CD4-positive, alpha-beta T cell (primary cell): ENCODE measurements at regions of chr16 and their contacts with region 1.

Region 1: GRCh38 chr16:22335668-22336246 is 38.5 kb downstream of the POLR3E start:
- DNase-seq: no peak
- ATAC-seq: peak; percentile 28
- H3K4me3 ChIP-seq: no peak overlapping the region
- H3K4me3 Mint-ChIP-seq: no peak overlapping the region
- H3K27ac ChIP-seq: no peak overlapping the region
- H3K27ac Mint-ChIP-seq: peak overlapping the region; percentile 64
- H3K4me1 ChIP-seq: no peaks in the 10 kb centered on the region
- H3K4me1 Mint-ChIP-seq: peaks cover 29% of the 10 kb centered on the region
- H3K27me3 ChIP-seq: no peaks in the 10 kb centered on the region
- H3K27me3 Mint-ChIP-seq: no peaks in the 10 kb centered on the region
- CTCF ChIP-seq: no peak

Region 2: DNA sequence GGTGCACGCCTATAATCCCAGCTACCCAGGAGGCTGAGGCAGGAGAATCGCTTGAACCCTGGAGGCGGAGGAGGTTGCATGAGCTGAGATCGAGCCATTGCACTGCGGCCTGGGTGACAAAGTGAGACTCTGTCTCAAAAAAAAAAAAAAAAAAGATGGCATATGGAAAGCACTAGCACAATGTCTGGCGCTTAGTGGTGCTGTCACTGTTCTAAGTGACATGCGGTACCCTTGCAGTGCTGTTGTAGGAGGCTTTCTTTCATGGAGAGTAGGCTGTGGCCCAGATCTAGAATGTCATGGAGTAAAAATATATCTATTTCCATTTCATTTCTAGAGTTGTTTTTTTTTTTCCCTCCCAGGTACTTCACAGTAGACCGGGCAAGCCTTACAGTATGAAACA is 750.9 kb before region 1 on chr16:
- CTCF ChIA-PET with region 1: no interaction called
- POLR2A ChIA-PET with region 1: no interaction called
- intact Hi-C with region 1: no loop called
- DNase-seq: no peak
- ATAC-seq: no peak
- H3K4me3 ChIP-seq: no peak overlapping the region
- H3K4me3 Mint-ChIP-seq: no peak overlapping the region
- H3K27ac ChIP-seq: no peak overlapping the region
- H3K27ac Mint-ChIP-seq: no peak overlapping the region
- H3K4me1 ChIP-seq: peaks cover 6% of the 10 kb centered on the region
- H3K4me1 Mint-ChIP-seq: peaks cover 5% of the 10 kb centered on the region
- H3K27me3 ChIP-seq: no peaks in the 10 kb centered on the region
- H3K27me3 Mint-ChIP-seq: no peaks in the 10 kb centered on the region
- CTCF ChIP-seq: no peak

Region 3: DNA sequence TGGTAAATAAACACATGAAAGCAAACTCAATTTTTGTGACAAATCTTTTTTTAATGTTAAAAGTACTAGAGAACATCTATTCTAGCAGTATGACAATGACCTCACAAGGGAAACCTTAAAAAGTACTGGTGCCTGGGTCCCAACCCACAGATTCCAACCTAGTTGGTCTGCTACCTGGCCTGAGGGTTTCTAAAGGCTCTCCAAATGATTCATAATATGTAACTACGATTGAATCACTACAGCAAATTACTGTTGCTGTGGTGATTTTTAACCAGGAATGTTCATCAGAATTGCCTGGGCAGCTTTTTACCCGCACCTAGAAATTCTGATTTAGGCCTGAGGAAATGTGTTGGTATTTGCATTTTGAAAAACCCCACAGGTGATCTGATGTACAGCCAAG is 12.5 kb after region 1 on chr16:
- CTCF ChIA-PET with region 1: interaction called, 3 read pairs
- POLR2A ChIA-PET with region 1: interaction called, 7 read pairs
- intact Hi-C with region 1: loop called in 1 of 2 experiments (anchors 2 kb)
- DNase-seq: no peak
- ATAC-seq: no peak
- H3K4me3 ChIP-seq: no peak overlapping the region
- H3K4me3 Mint-ChIP-seq: no peak overlapping the region
- H3K27ac ChIP-seq: no peak overlapping the region
- H3K27ac Mint-ChIP-seq: peak overlapping the region; percentile 33
- H3K4me1 ChIP-seq: peaks cover 4% of the 10 kb centered on the region
- H3K4me1 Mint-ChIP-seq: peaks cover 42% of the 10 kb centered on the region
- H3K27me3 ChIP-seq: no peaks in the 10 kb centered on the region
- H3K27me3 Mint-ChIP-seq: no peaks in the 10 kb centered on the region
- CTCF ChIP-seq: no peak

Region 4: GRCh38 chr16:22369221-22369811 is 33.6 kb after region 1 on chr16:
- CTCF ChIA-PET with region 1: no interaction called
- POLR2A ChIA-PET with region 1: interaction called, 21 read pairs
- intact Hi-C with region 1: no loop called
- DNase-seq: peak in 3 of 14 experiments; percentile 49 to 78 (median 49)
- ATAC-seq: no peak
- H3K4me3 ChIP-seq: no peak overlapping the region
- H3K4me3 Mint-ChIP-seq: peak overlapping the region; percentile 73
- H3K27ac ChIP-seq: peak overlapping the region in 1 of 2 donors; percentile 45
- H3K27ac Mint-ChIP-seq: peak overlapping the region; percentile 97
- H3K4me1 ChIP-seq: peaks cover 45% of the 10 kb centered on the region
- H3K4me1 Mint-ChIP-seq: peaks cover 89% of the 10 kb centered on the region
- H3K27me3 ChIP-seq: no peaks in the 10 kb centered on the region
- H3K27me3 Mint-ChIP-seq: no peaks in the 10 kb centered on the region
- CTCF ChIP-seq: no peak